A673 (cell line): ENCODE measurements at regions of chr9 and their contacts with region 1.

Region 1: GRCh38 chr9:125227761-125228160 is 13.4 kb downstream of the HSPA5 start:
- DNase-seq: no peak
- H3K4me3 ChIP-seq: no peak overlapping the region
- H3K27ac ChIP-seq: no peak overlapping the region
- H3K4me1 ChIP-seq: no peaks in the 10 kb centered on the region
- H3K27me3 ChIP-seq: no peaks in the 10 kb centered on the region
- CTCF ChIP-seq: no peak

Region 2: GRCh38 chr9:125172031-125172755 is 55.6 kb before region 1 on chr9:
- CTCF ChIA-PET with region 1: no interaction called
- POLR2A ChIA-PET with region 1: no interaction called
- intact Hi-C with region 1: loop called (anchors 5 kb)
- DNase-seq: peak; percentile 78
- H3K4me3 ChIP-seq: no peak overlapping the region
- H3K27ac ChIP-seq: peak overlapping the region; percentile 46
- H3K4me1 ChIP-seq: peaks cover 36% of the 10 kb centered on the region
- H3K27me3 ChIP-seq: no peaks in the 10 kb centered on the region
- CTCF ChIP-seq: no peak